MCF 10A (cell line): ENCODE measurements at regions of chr14 and their contacts with region 1.

Region 1: DNA sequence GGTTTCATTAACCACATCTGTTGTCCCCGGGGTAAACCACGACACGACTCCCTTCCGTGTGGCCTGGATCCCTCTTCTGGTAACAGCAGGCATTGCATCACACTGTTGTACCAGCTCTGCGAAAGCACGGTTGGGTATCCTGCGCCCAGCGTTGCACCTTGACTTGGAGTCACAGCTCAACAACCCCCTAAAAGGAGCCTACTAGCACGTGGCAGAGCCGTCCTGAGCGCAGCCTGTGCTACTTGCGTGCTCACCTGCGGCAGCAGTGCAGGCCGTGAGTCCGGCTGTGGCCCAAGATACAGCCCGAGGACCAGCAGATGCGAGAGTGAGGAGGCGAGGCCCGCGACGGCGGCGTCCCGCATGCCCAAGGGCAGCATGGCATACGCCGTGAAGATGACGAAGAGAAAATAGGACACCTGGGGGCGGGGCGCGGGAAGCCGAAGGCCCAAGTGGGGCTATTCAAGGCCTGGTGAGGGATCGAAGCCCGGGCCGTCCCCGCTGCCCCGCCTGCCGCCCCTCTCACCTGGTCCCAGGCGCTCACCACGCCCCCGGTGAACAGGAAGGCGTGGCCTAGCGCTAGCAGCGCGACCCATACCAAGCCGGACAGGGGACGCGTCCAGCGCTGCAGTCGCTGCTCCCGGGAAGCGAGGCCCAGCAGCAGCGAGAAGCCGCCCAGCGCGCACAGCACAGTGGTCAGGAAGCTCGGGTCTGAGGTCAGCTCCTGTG is 2.4 kb downstream of the ADCY4 start:
- DNase-seq: peak; percentile 72
- H3K4me3 Mint-ChIP-seq: no peak overlapping the region
- H3K27ac Mint-ChIP-seq: no peak overlapping the region
- H3K4me1 Mint-ChIP-seq: peaks cover 7% of the 10 kb centered on the region
- H3K27me3 Mint-ChIP-seq: peaks cover 11% of the 10 kb centered on the region
- CTCF ChIP-seq: peak; percentile 60

Region 2: GRCh38 chr14:24280797-24281460 is 51.5 kb before region 1 on chr14:
- CTCF ChIA-PET with region 1: no interaction called
- POLR2A ChIA-PET with region 1: no interaction called
- intact Hi-C with region 1: no loop called
- DNase-seq: no peak
- H3K4me3 Mint-ChIP-seq: no peak overlapping the region
- H3K27ac Mint-ChIP-seq: peak overlapping the region; percentile 53
- H3K4me1 Mint-ChIP-seq: peaks cover 31% of the 10 kb centered on the region
- H3K27me3 Mint-ChIP-seq: no peaks in the 10 kb centered on the region
- CTCF ChIP-seq: no peak

Region 3: DNA sequence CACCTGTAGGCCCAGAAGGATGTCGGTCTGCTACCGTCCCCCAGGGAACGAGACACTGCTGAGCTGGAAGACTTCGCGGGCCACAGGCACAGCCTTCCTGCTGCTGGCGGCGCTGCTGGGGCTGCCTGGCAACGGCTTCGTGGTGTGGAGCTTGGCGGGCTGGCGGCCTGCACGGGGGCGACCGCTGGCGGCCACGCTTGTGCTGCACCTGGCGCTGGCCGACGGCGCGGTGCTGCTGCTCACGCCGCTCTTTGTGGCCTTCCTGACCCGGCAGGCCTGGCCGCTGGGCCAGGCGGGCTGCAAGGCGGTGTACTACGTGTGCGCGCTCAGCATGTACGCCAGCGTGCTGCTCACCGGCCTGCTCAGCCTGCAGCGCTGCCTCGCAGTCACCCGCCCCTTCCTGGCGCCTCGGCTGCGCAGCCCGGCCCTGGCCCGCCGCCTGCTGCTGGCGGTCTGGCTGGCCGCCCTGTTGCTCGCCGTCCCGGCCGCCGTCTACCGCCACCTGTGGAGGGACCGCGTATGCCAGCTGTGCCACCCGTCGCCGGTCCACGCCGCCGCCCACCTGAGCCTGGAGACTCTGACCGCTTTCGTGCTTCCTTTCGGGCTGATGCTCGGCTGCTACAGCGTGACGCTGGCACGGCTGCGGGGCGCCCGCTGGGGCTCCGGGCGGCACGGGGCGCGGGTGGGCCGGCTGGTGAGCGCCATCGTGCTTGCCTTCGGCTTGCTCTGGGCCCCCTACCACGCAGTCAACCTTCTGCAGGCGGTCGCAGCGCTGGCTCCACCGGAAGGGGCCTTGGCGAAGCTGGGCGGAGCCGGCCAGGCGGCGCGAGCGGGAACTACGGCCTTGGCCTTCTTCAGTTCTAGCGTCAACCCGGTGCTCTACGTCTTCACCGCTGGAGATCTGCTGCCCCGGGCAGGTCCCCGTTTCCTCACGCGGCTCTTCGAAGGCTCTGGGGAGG is 21.5 kb before region 1 on chr14 and contains the start of gene LTB4R:
- CTCF ChIA-PET with region 1: interaction called, 35 read pairs
- POLR2A ChIA-PET with region 1: interaction called, 3 read pairs
- intact Hi-C with region 1: no loop called
- DNase-seq: peak; percentile 72
- H3K4me3 Mint-ChIP-seq: peak within 1 kb of the TSS; percentile 69
- H3K27ac Mint-ChIP-seq: no peak within 1 kb of the TSS
- H3K4me1 Mint-ChIP-seq: peaks cover 35% of the 10 kb centered on the region
- H3K27me3 Mint-ChIP-seq: no peaks in the 10 kb centered on the region
- CTCF ChIP-seq: peak; percentile 19
- total RNA-seq, gene LTB4R: 15.8 and 19.9 TPM in 2 replicates

Region 4: DNA sequence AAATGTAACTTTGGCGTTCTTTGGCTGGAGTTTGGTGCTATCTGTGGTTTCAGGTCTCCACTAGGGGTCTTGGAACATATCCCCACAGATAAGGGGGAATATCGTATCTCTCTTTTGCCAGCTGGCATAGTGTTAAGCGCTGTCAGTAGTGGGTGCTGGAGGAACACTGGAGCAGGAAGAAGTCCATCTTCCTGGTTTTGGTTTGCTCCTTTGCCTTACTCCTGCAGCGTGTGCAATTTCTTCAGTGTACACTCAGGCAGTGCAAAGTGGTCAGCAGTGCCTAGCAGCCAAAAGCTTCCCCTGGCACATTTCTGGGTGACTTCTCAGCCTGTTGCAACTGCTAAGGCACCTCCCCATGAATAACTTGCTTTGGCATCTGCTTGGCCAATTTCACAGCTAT is 19.1 kb after region 1 on chr14:
- CTCF ChIA-PET with region 1: interaction called, 108 read pairs
- POLR2A ChIA-PET with region 1: no interaction called
- intact Hi-C with region 1: no loop called
- DNase-seq: peak; percentile 45
- H3K4me3 Mint-ChIP-seq: no peak overlapping the region
- H3K27ac Mint-ChIP-seq: no peak overlapping the region
- H3K4me1 Mint-ChIP-seq: peaks cover 18% of the 10 kb centered on the region
- H3K27me3 Mint-ChIP-seq: peaks cover 16% of the 10 kb centered on the region
- CTCF ChIP-seq: no peak

Region 5: GRCh38 chr14:24395609-24396582 is 63.5 kb after region 1 on chr14:
- CTCF ChIA-PET with region 1: interaction called, 23 read pairs
- POLR2A ChIA-PET with region 1: no interaction called
- intact Hi-C with region 1: no loop called
- DNase-seq: no peak
- H3K4me3 Mint-ChIP-seq: no peak overlapping the region
- H3K27ac Mint-ChIP-seq: peak overlapping the region; percentile 84
- H3K4me1 Mint-ChIP-seq: peaks cover 28% of the 10 kb centered on the region
- H3K27me3 Mint-ChIP-seq: no peaks in the 10 kb centered on the region
- CTCF ChIP-seq: no peak

Region 6: GRCh38 chr14:24425704-24426103 is 93.3 kb after region 1 on chr14:
- CTCF ChIA-PET with region 1: interaction called, 626 read pairs
- POLR2A ChIA-PET with region 1: interaction called, 52 read pairs
- intact Hi-C with region 1: no loop called
- DNase-seq: peak; percentile 84
- H3K4me3 Mint-ChIP-seq: no peak overlapping the region
- H3K27ac Mint-ChIP-seq: peak overlapping the region; percentile 80
- H3K4me1 Mint-ChIP-seq: peaks cover 31% of the 10 kb centered on the region
- H3K27me3 Mint-ChIP-seq: no peaks in the 10 kb centered on the region
- CTCF ChIP-seq: no peak